ENCODE measurements at regions of chr6 and their contacts with region 1.

Region 1: GRCh38 chr6:35452186-35453090 is at the start of gene FANCE:
- DNase-seq: peak; percentile 97
- H3K4me3 ChIP-seq: peak within 1 kb of the TSS; percentile 61 to 67
- H3K27ac ChIP-seq: peak within 1 kb of the TSS in 1 of 2 donors; percentile 74
- H3K4me1 ChIP-seq: peaks cover 14% of the 10 kb centered on the region
- H3K27me3 ChIP-seq: no peaks in the 10 kb centered on the region
- CTCF ChIP-seq: no peak
- POLR2A ChIP-seq: no peak
- total RNA-seq, gene FANCE: 14.1 to 15.0 TPM

Region 2: GRCh38 chr6:35342258-35343091 is 110.0 kb before region 1 on chr6 and contains the start of gene PPARD:
- intact Hi-C with region 1: loop called (anchors 5 kb)
- DNase-seq: peak; percentile 99
- H3K4me3 ChIP-seq: peak within 1 kb of the TSS; percentile 75 to 80
- H3K27ac ChIP-seq: peak within 1 kb of the TSS; percentile 81 to 89
- H3K4me1 ChIP-seq: peaks cover 14% of the 10 kb centered on the region
- H3K27me3 ChIP-seq: no peaks in the 10 kb centered on the region
- CTCF ChIP-seq: peak; percentile 95 to 100 (median 99)
- POLR2A ChIP-seq: peak; percentile 56
- total RNA-seq, gene PPARD: 21.0 to 23.0 TPM

Region 3: GRCh38 chr6:35359751-35360348 is 92.6 kb before region 1 on chr6:
- intact Hi-C with region 1: loop called (anchors 5 kb)
- DNase-seq: peak; percentile 37
- H3K4me3 ChIP-seq: no peak overlapping the region
- H3K27ac ChIP-seq: no peak overlapping the region
- H3K4me1 ChIP-seq: peaks cover 34% of the 10 kb centered on the region
- H3K27me3 ChIP-seq: no peaks in the 10 kb centered on the region
- CTCF ChIP-seq: no peak
- POLR2A ChIP-seq: no peak